Activated T-helper 1 cell treated with anti-CD3 and anti-CD28 coated beads, Interleukin-12 subunit alpha, Interleukin-12 subunit beta, Interleukin-2, Interleukin-4 antibody, amounts not matched to agents 30 ng/mL and 10 ng/mL and 1 ng/mL, durations not matched to agents 14 hours and 24 hours and 36 hours (primary cell): ENCODE measurements at regions of chr9 and their contacts with region 1.

Region 1: DNA sequence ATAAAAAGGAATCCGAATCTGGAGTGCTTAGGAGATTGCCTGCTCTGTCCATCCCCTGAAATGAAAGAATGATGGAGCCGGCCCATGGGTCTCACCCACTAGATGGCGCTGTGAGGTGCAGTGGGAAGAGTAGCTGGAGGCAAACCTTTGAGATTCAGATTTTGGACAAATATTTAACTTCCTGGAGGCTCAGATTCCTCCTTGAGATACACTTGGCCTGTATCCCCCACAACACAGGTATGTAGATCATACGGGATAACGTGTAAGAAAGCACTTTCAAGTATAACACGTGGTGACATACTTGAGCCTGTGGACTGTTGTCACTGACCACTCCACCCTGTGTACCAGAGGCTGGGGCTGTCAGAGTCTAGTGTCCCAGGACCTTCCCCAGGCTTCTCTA is 32.3 kb downstream of the TRMO start:
- DNase-seq: peak; percentile 51
- H3K4me3 Mint-ChIP-seq: no peak overlapping the region
- H3K27ac Mint-ChIP-seq: no peak overlapping the region
- H3K4me1 Mint-ChIP-seq: peaks cover 6% of the 10 kb centered on the region
- H3K27me3 Mint-ChIP-seq: peaks cover 4% of the 10 kb centered on the region

Region 2: DNA sequence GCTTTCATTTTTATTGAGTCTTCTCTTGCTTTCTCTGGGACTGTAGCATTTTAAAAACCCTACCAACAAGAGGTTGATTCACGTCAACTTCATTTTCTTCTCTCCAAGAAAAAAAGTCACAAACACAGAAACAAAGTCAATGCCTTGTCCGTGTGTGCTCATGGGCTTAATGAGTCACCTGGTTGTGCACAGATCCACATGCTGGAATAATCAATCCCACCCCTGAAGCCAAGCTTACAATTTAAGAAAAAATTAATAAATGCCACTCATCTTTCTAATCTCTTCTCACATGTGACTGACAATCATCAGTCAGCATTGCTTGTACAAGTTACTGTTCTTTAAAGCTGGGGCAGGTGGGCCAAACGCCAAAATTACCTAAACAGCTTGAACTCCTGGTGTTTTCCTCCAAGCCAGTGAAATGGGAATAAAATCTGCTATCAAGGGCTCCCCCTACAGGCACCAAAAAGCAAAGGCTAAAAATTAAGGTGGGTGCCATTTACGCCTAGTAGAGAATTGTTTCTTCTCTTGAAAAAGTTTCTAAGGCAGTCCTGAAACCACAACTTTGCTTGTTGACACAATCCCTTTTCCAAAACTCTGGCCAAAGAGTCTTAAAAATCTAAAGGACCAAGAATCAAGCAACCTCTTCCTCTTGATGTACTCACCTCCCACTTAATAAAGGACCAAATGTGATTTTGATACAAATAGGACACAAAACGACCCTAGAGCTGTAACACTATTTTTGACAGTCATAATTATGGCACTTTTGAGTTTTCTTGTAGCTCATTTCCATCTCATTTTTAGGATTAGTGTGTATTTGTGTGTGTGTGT is 10.9 kb after region 1 on chr9:
- intact Hi-C with region 1: loop called (anchors 1 kb)
- DNase-seq: no peak
- H3K4me3 Mint-ChIP-seq: no peak overlapping the region
- H3K27ac Mint-ChIP-seq: no peak overlapping the region
- H3K4me1 Mint-ChIP-seq: peaks cover 48% of the 10 kb centered on the region
- H3K27me3 Mint-ChIP-seq: no peaks in the 10 kb centered on the region

Region 3: GRCh38 chr9:97954550-97954989 is 64.5 kb after region 1 on chr9:
- intact Hi-C with region 1: loop called (anchors 2 kb)
- DNase-seq: peak; percentile 35
- H3K4me3 Mint-ChIP-seq: no peak overlapping the region
- H3K27ac Mint-ChIP-seq: no peak overlapping the region
- H3K4me1 Mint-ChIP-seq: no peaks in the 10 kb centered on the region
- H3K27me3 Mint-ChIP-seq: peaks cover 8% of the 10 kb centered on the region

Region 4: GRCh38 chr9:98118640-98119601 is 228.9 kb after region 1 on chr9 and contains the start of gene TRIM14:
- intact Hi-C with region 1: no loop called
- DNase-seq: peak; percentile 71
- H3K4me3 Mint-ChIP-seq: peak within 1 kb of the TSS; percentile 95
- H3K27ac Mint-ChIP-seq: peak within 1 kb of the TSS; percentile 98
- H3K4me1 Mint-ChIP-seq: peaks cover 42% of the 10 kb centered on the region
- H3K27me3 Mint-ChIP-seq: no peaks in the 10 kb centered on the region
- total RNA-seq, gene TRIM14: 41.7 and 42.0 TPM in 2 replicates